B cell (primary cell): ENCODE measurements at regions of chr3 and their contacts with region 1.

Region 1: DNA sequence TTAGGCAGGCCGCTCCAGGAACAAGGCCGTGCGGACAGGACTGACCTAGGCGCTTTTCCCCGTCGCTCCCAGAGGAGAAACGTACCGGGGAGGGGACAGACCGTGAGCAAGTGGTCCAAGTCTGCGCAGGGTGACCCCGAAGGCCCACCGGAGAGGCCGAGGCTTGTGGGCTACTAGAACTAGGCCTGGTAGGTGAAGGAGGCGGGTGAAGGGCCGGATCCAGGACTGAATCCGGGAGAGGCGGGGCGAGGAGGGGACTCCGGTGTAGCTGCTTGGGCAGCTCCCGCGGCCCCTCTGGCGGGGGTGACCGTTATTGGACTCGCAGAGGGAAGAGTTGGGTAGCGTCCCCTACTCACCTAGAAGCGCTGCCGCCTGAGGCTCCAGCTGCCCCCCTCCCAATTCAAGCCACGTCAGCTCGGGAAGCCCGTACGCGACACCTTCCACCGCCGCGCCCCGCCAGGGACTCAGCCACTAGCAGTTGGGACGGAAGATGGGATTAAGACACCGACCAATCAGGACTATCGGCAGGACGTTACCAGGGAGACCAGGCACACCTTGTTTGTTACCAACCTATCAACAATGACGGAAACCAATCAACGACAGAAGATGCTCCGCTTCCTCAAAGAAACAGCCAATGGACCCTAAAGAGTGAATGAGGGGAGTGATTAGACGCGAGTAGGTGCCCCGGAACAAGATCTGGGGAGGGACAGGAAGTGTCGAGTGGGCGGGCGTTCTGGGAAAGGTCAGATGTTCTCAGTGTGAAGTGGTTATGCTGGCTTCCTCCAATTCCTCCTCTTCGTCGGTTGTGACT is at the start of gene GOLGB1:
- DNase-seq: peak; percentile 97
- ATAC-seq: peak; percentile 93
- H3K4me3 ChIP-seq: peak within 1 kb of the TSS; percentile 75 to 100 (median 96)
- H3K4me3 Mint-ChIP-seq: no peak within 1 kb of the TSS
- H3K27ac ChIP-seq: peak within 1 kb of the TSS; percentile 90 to 98
- H3K27ac Mint-ChIP-seq: no peak within 1 kb of the TSS
- H3K4me1 ChIP-seq: peaks cover 18 to 19% of the 10 kb centered on the region in 2 donors
- H3K4me1 Mint-ChIP-seq: peaks cover 11% of the 10 kb centered on the region
- H3K27me3 ChIP-seq: no peaks in the 10 kb centered on the region
- H3K27me3 Mint-ChIP-seq: no peaks in the 10 kb centered on the region
- CTCF ChIP-seq: no peak
- total RNA-seq, gene GOLGB1: 58.7 and 64.3 TPM in 2 replicates

Region 2: DNA sequence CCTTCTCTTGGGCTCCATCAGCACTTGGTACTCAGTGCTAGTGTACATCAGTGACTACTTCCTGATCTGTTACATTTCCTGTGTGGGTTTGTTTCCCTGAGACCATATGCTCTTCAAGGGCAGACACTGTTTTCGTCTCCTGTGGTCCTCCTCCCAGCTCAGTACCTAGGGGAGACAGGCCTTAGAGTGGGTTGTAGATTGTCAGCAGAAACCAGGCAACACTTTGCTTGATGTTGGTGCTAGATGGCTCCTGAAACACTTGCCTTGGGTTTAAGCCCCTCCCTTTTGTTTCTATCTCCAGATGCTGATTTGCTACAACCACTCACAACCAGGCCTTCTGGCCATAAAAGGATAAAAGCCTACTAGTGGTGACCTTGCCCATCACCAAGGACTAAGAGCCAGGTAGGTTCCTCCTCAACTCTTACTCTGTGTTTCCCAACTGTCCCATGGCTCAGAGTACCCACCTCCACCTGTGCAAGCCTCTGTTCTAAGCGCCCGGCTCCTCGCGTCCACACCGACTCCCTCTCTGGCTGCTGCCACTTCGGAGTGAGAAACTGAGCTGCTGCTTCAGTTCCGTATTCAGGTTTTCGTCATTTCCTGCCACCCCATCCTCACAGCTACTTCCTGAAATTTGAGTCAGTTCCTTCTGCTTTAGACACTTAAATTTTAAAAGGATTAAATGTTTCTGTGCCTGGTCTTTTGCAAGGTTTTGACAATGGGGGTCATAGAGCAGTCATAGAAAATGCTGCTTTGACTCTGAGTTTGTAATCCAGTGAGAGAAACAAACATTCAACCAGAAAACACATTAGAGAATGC is 88.9 kb before region 1 on chr3 and contains the start of gene HCLS1:
- CTCF ChIA-PET with region 1: no interaction called
- POLR2A ChIA-PET with region 1: no interaction called
- intact Hi-C with region 1: loop called (anchors 1 kb)
- DNase-seq: peak; percentile 91
- ATAC-seq: peak; percentile 84
- H3K4me3 ChIP-seq: peak within 1 kb of the TSS; percentile 59 to 92 (median 68)
- H3K4me3 Mint-ChIP-seq: peak within 1 kb of the TSS; percentile 97
- H3K27ac ChIP-seq: peak within 1 kb of the TSS; percentile 90 to 94
- H3K27ac Mint-ChIP-seq: peak within 1 kb of the TSS; percentile 98
- H3K4me1 ChIP-seq: peaks cover 34 to 39% of the 10 kb centered on the region in 2 donors
- H3K4me1 Mint-ChIP-seq: peaks cover 54% of the 10 kb centered on the region
- H3K27me3 ChIP-seq: no peaks in the 10 kb centered on the region
- H3K27me3 Mint-ChIP-seq: no peaks in the 10 kb centered on the region
- CTCF ChIP-seq: no peak
- total RNA-seq, gene HCLS1: 317 and 331 TPM in 2 replicates

Region 3: GRCh38 chr3:121803771-121804320 is 54.4 kb after region 1 on chr3:
- CTCF ChIA-PET with region 1: no interaction called
- POLR2A ChIA-PET with region 1: interaction called, 3 read pairs
- intact Hi-C with region 1: loop called (anchors 5 kb)
- DNase-seq: peak; percentile 35
- ATAC-seq: peak; percentile 21
- H3K4me3 ChIP-seq: peak overlapping the region in 2 of 5 experiments; percentile 6 to 46
- H3K4me3 Mint-ChIP-seq: peak overlapping the region; percentile 83
- H3K27ac ChIP-seq: peak overlapping the region; percentile 22 to 77
- H3K27ac Mint-ChIP-seq: peak overlapping the region; percentile 87
- H3K4me1 ChIP-seq: peaks cover 12 to 52% of the 10 kb centered on the region in 2 donors
- H3K4me1 Mint-ChIP-seq: peaks cover 58% of the 10 kb centered on the region
- H3K27me3 ChIP-seq: no peaks in the 10 kb centered on the region
- H3K27me3 Mint-ChIP-seq: no peaks in the 10 kb centered on the region
- CTCF ChIP-seq: no peak

Region 4: DNA sequence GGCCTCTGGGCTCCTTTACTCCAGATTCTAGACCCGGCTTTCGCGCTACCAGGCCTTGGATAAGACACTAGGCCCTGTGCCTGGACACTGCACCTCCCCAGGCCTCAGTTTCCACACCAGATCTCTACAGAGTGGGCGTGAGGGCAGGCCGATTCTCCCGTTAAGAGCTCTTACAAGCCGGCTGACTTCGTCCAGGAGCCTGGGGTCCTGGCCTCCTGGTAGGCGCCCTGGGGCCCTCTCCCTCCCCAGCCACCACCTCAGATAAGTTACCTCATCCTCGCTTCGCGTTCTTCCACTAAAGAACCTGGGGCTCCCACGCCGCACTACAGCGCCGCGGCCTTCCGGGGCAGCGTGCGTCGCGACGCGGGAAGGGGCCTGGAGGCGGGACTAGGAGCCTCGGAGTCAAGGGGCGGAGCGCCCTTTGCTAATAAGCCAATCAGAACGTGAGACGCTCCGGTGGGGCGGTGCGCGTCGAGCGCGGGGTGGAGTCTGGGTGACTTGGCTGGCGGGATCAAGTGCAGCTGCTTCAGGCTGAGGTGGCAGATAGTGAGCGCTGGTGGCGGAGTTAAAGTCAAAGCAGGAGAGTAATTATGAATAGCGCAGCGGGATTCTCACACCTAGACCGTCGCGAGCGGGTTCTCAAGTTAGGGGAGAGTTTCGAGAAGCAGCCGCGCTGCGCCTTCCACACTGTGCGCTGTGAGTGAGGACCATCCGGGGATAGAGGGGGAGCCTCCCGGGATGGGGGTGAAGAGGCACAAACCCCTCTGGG is 85.4 kb after region 1 on chr3 and contains the starts of genes EAF2 and IQCB1:
- CTCF ChIA-PET with region 1: interaction called, 3 read pairs
- POLR2A ChIA-PET with region 1: no interaction called
- intact Hi-C with region 1: loop called (anchors 1 kb)
- DNase-seq: peak; percentile 99
- ATAC-seq: peak; percentile 97
- H3K4me3 ChIP-seq: peak within 1 kb of the TSS; percentile 83 to 97 (median 94)
- H3K4me3 Mint-ChIP-seq: peak within 1 kb of the TSS; percentile 89
- H3K27ac ChIP-seq: peak within 1 kb of the TSS; percentile 88 to 94
- H3K27ac Mint-ChIP-seq: peak within 1 kb of the TSS; percentile 88
- H3K4me1 ChIP-seq: peaks cover 22 to 46% of the 10 kb centered on the region in 2 donors
- H3K4me1 Mint-ChIP-seq: peaks cover 64% of the 10 kb centered on the region
- H3K27me3 ChIP-seq: no peaks in the 10 kb centered on the region
- H3K27me3 Mint-ChIP-seq: no peaks in the 10 kb centered on the region
- CTCF ChIP-seq: no peak
- total RNA-seq, gene EAF2: 31.1 and 35.0 TPM in 2 replicates
- total RNA-seq, gene IQCB1: 54.6 and 56.5 TPM in 2 replicates

Region 5: DNA sequence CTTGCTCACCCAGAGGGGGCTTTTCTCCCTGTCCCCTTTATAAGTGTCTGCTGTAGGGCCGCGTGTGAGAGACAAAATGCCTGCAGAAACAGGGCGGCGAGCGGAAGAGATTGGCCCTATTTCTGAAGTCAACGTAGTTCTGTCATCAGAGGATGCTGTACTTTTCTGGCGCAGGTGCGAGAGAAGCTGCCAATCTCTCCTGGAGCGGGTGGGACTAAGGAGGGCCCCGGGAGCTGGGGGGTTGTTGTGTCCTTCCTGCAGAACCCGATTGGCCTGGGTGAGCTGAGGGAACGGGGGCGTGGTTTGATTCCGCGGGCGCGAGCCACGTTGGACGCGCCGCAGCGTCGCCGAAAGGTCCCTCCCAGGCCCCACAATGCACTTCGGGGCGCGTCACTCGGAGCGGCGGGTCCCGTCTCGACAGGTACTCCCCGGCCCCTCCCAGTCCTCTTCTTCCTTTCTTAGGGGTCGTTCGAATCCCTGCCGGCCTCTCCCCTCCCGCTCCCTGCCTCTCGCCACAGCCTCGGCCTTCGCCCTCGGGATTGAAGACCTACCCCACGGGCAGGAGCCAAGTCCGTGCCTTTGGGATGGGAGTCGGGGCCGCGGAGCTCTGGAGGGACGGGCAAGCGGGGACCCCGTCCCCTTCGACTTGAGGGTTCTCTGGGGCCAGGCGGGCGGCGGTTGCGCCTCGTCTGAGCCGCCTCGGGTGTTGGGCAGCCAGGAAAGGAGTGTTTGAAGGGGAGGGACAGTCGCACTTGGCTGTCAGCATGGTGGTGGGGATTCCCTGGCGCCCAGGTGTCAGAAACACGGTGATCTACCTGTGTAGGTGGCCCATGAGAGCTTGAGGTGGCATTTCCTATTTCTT is 1452.3 kb after region 1 on chr3 and contains the start of gene SEC22A:
- CTCF ChIA-PET with region 1: no interaction called
- POLR2A ChIA-PET with region 1: no interaction called
- intact Hi-C with region 1: loop called (anchors 5 kb)
- DNase-seq: peak; percentile 95
- ATAC-seq: peak; percentile 96
- H3K4me3 ChIP-seq: peak within 1 kb of the TSS; percentile 86 to 99 (median 90)
- H3K4me3 Mint-ChIP-seq: peak within 1 kb of the TSS; percentile 95
- H3K27ac ChIP-seq: peak within 1 kb of the TSS; percentile 92 to 96
- H3K27ac Mint-ChIP-seq: peak within 1 kb of the TSS; percentile 94
- H3K4me1 ChIP-seq: peaks cover 13 to 18% of the 10 kb centered on the region in 2 donors
- H3K4me1 Mint-ChIP-seq: peaks cover 22% of the 10 kb centered on the region
- H3K27me3 ChIP-seq: no peaks in the 10 kb centered on the region
- H3K27me3 Mint-ChIP-seq: no peaks in the 10 kb centered on the region
- CTCF ChIP-seq: no peak
- total RNA-seq, gene SEC22A: 16.1 and 19.3 TPM in 2 replicates